Right ventricle myocardium superior (tissue), 1 donor: ENCODE measurements at regions of chr18 and their contacts with region 1.

Region 1: GRCh38 chr18:616380-616995 is 19.7 kb downstream of the CLUL1 start:
- DNase-seq: no peak
- ATAC-seq: peak; percentile 82

Region 2: DNA sequence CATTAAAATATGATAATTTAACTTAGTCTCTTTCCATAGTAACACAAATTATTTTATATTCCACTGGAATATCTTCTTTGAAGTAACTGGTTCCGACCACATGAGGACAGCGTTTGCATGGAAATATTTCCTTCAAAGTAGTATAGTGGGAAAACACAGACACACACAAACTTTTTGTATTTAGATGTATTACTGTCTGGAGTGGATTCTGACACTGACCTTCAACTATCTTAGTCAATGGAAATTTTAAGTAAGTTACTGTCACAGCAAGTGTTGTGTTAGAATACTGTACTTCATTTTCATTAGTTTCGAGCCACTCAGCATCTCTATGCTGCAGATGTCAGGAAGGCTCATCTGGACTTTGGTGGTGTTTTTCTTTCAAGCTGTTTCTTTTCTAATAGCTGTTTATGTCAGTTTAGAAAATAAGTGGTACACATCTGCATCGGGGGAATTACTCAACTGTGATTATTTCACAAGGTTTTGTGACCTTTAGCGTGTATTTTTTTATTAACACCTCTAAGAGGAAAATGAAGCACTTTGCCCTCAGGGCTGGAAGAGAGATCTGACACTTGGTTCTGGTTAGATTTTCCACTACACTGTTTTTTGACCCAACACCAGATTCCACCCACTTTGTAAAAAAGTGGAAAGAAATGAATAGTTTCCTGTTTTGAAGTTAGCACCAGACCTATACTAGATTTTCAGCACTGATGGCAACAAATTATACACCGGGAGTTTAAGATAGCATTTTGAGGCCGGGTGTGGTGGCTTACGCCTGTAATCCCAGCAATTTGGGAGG is 329.8 kb before region 1 on chr18:
- intact Hi-C with region 1: loop called (anchors 5 kb)
- DNase-seq: no peak
- ATAC-seq: no peak